Transverse colon (tissue), 4 donors: ENCODE measurements at regions of chr3 and their contacts with region 1.

Region 1: GRCh38 chr3:149575961-149576564 is 81.8 kb downstream of the WWTR1 start:
- DNase-seq: no peak
- H3K4me3 ChIP-seq: no peak overlapping the region
- H3K27ac ChIP-seq: peak overlapping the region; percentile 78 to 83 (median 80)
- H3K4me1 ChIP-seq: peaks cover 15 to 79% (median 25%) of the 10 kb centered on the region in 4 donors
- H3K27me3 ChIP-seq: no peaks in the 10 kb centered on the region
- CTCF ChIP-seq: no peak
- EP300 ChIP-seq: no peak
- POLR2A ChIP-seq: no peak

Region 2: DNA sequence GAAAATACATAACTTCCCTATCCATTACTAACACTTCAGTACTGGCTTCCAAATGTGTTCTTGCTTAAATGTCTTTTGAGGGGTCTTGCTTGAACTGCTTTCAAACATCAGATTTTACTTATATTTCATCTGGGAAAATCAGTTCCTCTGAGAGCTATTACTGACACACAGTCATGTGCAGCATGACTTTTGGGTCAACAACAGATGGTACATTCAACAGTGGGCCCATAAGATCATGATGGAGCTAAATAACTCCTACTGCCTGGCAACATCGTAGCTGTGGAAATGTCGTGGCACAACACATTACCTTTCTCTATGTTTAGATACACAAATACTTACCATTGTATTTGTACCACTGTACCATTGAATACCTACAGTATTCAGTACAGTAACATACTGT is 37.9 kb after region 1 on chr3:
- in situ Hi-C with region 1: no loop called
- intact Hi-C with region 1: loop called (anchors 1 kb)
- DNase-seq: no peak
- H3K4me3 ChIP-seq: no peak overlapping the region
- H3K27ac ChIP-seq: no peak overlapping the region
- H3K4me1 ChIP-seq: peaks cover 0 to 44% (median 14%) of the 10 kb centered on the region in 4 donors
- H3K27me3 ChIP-seq: peaks cover 13% of the 10 kb centered on the region
- CTCF ChIP-seq: no peak
- EP300 ChIP-seq: no peak
- POLR2A ChIP-seq: no peak

Region 3: GRCh38 chr3:149638228-149639092 is 62.4 kb after region 1 on chr3:
- in situ Hi-C with region 1: no loop called
- intact Hi-C with region 1: no loop called
- DNase-seq: no peak
- H3K4me3 ChIP-seq: peak overlapping the region in 1 of 4 donors; percentile 12
- H3K27ac ChIP-seq: peak overlapping the region; percentile 36 to 75 (median 54)
- H3K4me1 ChIP-seq: peaks cover 0 to 60% (median 13%) of the 10 kb centered on the region in 4 donors
- H3K27me3 ChIP-seq: peaks cover 84% of the 10 kb centered on the region
- CTCF ChIP-seq: no peak
- EP300 ChIP-seq: no peak
- POLR2A ChIP-seq: no peak

Region 4: GRCh38 chr3:150079029-150079739 is 503.1 kb after region 1 on chr3:
- in situ Hi-C with region 1: no loop called
- intact Hi-C with region 1: no loop called
- DNase-seq: no peak
- H3K4me3 ChIP-seq: no peak overlapping the region
- H3K27ac ChIP-seq: peak overlapping the region in 2 of 4 donors; percentile 24 to 35
- H3K4me1 ChIP-seq: peaks cover 0 to 14% (median 2%) of the 10 kb centered on the region in 4 donors
- H3K27me3 ChIP-seq: no peaks in the 10 kb centered on the region
- CTCF ChIP-seq: no peak
- EP300 ChIP-seq: no peak
- POLR2A ChIP-seq: no peak

Region 5: DNA sequence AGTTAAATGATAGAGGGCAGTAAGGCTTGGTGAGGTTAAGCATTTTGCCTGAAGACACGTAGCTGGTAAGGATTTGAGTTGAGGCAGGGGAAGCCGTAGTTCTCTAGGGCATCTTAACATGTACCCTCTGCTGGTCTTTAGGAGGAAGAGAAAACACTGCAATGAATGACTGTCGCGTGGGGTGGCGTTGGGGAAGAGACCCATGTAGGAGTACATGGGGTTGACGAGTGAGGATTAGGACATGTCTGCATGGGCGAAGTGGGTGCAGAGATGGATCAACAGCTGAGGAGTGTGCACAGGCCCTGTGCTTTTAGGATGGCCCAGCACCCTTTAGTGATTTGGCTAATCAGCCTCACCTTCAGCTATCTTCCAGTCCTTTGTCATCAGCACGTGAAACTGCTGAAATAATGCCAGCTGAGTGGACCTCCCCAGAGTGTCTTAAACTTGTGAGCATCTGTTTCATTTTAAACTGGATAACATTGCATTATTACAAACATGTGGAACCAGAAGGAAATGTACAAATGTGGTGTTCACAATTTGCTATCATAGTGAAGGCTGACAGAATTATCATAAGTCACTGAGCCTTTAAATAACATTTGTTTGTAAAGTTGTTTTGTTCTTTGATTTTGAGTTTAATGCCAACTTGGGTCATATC is 1686.9 kb after region 1 on chr3:
- in situ Hi-C with region 1: no loop called
- intact Hi-C with region 1: loop called (anchors 5 kb)
- DNase-seq: no peak
- H3K4me3 ChIP-seq: no peak overlapping the region
- H3K27ac ChIP-seq: peak overlapping the region; percentile 58 to 82 (median 76)
- H3K4me1 ChIP-seq: peaks cover 0 to 50% (median 6%) of the 10 kb centered on the region in 4 donors
- H3K27me3 ChIP-seq: no peaks in the 10 kb centered on the region
- CTCF ChIP-seq: no peak
- EP300 ChIP-seq: no peak
- POLR2A ChIP-seq: no peak